K562 (cell line): ENCODE measurements at regions of chr17 and their contacts with region 1.

Region 1: GRCh38 chr17:59746849-59747445 is 39.5 kb downstream of the VMP1 start:
- DNase-seq: peak in 3 of 4 experiments; percentile 14 to 56 (median 22)
- ATAC-seq: peak; percentile 78
- H3K4me3 ChIP-seq: no peak overlapping the region
- H3K27ac ChIP-seq: no peak overlapping the region
- H3K4me1 ChIP-seq: no peaks in the 10 kb centered on the region; a peak in 1 of 5 replicates
- H3K27me3 ChIP-seq: no peaks in the 10 kb centered on the region
- CTCF ChIP-seq: peak; percentile 46 to 74 (median 55); a peak in 4 of 6 replicates
- EP300 ChIP-seq: no peak
- POLR2A ChIP-seq: no peak
- RAD21 ChIP-seq: peak; percentile 58 to 83

Region 2: GRCh38 chr17:59521204-59522126 is 225.5 kb before region 1 on chr17:
- CTCF ChIA-PET with region 1: no interaction called
- POLR2A ChIA-PET with region 1: no interaction called
- in situ Hi-C with region 1: no loop called
- intact Hi-C with region 1: loop called (anchors 10 kb)
- DNase-seq: peak; percentile 73 to 91 (median 88)
- ATAC-seq: peak; percentile 95
- H3K4me3 ChIP-seq: no peak overlapping the region
- H3K27ac ChIP-seq: no peak overlapping the region
- H3K4me1 ChIP-seq: peaks cover 0 to 7% of the 10 kb centered on the region in 2 experiments; a peak in 2 of 5 replicates
- H3K27me3 ChIP-seq: peaks cover 0 to 2% of the 10 kb centered on the region in 2 experiments; a peak in 1 of 5 replicates
- CTCF ChIP-seq: peak; percentile 81 to 95 (median 90)
- EP300 ChIP-seq: no peak
- POLR2A ChIP-seq: no peak
- RAD21 ChIP-seq: peak; percentile 85 to 92

Region 3: DNA sequence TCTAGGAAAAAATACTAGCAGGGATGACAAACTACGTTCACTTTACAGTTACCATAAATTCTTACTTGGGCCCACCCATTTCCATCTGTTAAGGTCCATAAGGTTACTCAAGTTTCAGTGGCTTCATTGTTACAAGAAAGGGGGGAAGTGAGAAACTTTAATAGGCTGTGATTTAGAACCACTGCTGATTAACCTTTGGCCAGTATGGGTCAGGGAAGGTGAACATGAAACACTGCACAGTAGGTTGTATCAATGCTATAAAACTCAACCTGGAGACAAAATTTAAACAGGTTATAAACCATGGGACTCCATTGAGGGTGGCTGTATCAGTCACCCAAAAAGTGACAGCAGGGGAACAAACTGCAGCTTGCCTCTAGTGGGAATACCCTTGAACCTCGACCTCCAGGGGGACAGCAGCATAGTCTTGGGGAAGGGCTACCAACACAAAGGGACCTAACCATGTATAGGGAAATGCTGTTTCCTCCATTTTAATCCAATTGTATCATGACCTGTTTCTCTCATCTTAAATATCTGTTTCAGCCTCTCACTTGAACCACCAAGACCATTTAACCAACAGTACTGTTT is 50.2 kb before region 1 on chr17:
- CTCF ChIA-PET with region 1: no interaction called
- POLR2A ChIA-PET with region 1: no interaction called
- in situ Hi-C with region 1: no loop called
- intact Hi-C with region 1: no loop called
- DNase-seq: no peak
- ATAC-seq: peak; percentile 7
- H3K4me3 ChIP-seq: no peak overlapping the region
- H3K27ac ChIP-seq: peak overlapping the region; percentile 58; the same call in 1 of the 3 replicates
- H3K4me1 ChIP-seq: peaks cover 2 to 49% of the 10 kb centered on the region in 2 experiments; a peak in 2 of 5 replicates
- H3K27me3 ChIP-seq: no peaks in the 10 kb centered on the region
- CTCF ChIP-seq: no peak
- EP300 ChIP-seq: no peak
- POLR2A ChIP-seq: peak; percentile 26; the same call in 1 of the 2 replicates
- RAD21 ChIP-seq: no peak

Region 4: GRCh38 chr17:59712862-59713261 is 34.1 kb before region 1 on chr17:
- CTCF ChIA-PET with region 1: no interaction called
- POLR2A ChIA-PET with region 1: no interaction called
- in situ Hi-C with region 1: no loop called
- intact Hi-C with region 1: no loop called
- DNase-seq: no peak
- ATAC-seq: peak; percentile 36; the same call in 2 of the 3 replicates
- H3K4me3 ChIP-seq: no peak overlapping the region
- H3K27ac ChIP-seq: no peak overlapping the region
- H3K4me1 ChIP-seq: peaks cover 7 to 12% of the 10 kb centered on the region in 2 experiments; a peak in 3 of 5 replicates
- H3K27me3 ChIP-seq: no peaks in the 10 kb centered on the region
- CTCF ChIP-seq: no peak
- EP300 ChIP-seq: no peak
- POLR2A ChIP-seq: no peak
- RAD21 ChIP-seq: no peak

Region 5: DNA sequence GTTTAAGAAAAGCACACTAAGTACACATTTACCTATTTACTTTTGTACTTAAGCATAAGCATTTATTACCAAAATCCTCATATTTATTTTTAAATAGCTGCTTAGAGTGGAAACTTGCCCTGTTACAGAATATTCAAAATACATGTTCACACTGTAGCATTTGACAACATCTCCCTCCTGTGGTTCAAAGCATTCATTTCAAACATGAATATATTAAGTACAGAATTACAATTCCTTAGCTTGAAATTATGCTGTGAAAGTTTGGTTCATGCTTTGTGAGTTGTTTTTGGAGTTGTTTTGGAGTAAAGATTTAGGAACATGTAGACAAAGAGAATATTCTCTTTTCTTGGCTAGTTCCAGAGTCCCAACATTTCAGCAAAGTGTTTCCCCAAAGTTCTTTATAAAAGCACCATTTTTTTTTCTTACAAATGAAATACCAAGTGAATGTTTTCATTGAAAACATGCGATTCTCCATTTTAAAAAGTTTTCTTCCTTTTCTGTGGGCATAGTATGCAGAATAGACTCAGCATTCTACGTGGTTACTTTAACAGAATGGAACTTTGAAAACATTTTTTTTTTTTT is 112.6 kb after region 1 on chr17:
- CTCF ChIA-PET with region 1: interaction called, 54 read pairs
- POLR2A ChIA-PET with region 1: no interaction called
- in situ Hi-C with region 1: no loop called
- intact Hi-C with region 1: no loop called
- DNase-seq: peak in 1 of 4 experiments; percentile 30
- ATAC-seq: peak; percentile 82
- H3K4me3 ChIP-seq: no peak overlapping the region
- H3K27ac ChIP-seq: no peak overlapping the region
- H3K4me1 ChIP-seq: 0 out of 5 replicates have a peak, but pooled peaks cover 0 to 2% of the 10 kb centered on the region in 2 experiments
- H3K27me3 ChIP-seq: no peaks in the 10 kb centered on the region
- CTCF ChIP-seq: peak; percentile 43 to 75 (median 51); a peak in 4 of 6 replicates
- EP300 ChIP-seq: no peak
- POLR2A ChIP-seq: no peak
- RAD21 ChIP-seq: peak; percentile 77 to 86